Gastrocnemius medialis (tissue), 4 donors: ENCODE measurements at regions of chr9 and their contacts with region 1.

Region 1: GRCh38 chr9:101727612-101728524 is 10.6 kb downstream of the GRIN3A start:
- DNase-seq: no peak
- ATAC-seq: no peak
- H3K4me3 ChIP-seq: no peak overlapping the region
- H3K27ac ChIP-seq: no peak overlapping the region
- H3K4me1 ChIP-seq: no peaks in the 10 kb centered on the region
- H3K27me3 ChIP-seq: no peaks in the 10 kb centered on the region
- CTCF ChIP-seq: peak in 1 of 5 experiments; percentile 30
- POLR2A ChIP-seq: no peak

Region 2: DNA sequence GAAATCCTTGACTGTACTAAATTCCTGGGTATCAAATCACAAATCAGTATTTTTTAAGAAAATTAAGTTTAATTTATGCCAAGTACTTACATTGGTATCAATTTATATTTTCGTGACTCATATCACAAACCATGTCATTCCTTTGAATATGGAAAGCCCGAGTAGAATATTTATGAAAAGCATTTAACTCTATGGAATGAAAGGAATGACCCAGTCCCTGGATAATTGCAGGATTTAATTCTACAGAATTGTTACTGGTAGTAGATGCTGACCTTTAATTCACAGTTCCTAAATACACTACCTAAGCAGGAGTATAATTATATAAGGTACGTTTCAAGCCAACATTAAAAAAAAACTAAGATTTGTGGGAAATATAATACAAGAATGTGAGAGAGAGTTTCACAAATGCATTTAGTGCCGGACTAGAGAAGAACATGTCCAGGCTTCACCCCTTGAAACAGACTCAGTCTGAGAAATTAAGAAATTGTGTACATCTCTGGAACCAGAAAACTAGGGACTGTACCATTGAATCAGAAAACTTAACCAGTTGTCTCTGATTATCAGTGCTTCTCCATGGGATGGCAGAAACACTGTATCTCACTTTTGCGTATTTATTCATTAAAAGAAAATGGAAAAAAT is 727.8 kb before region 1 on chr9:
- in situ Hi-C with region 1: no loop called
- intact Hi-C with region 1: no loop called
- DNase-seq: no peak
- ATAC-seq: no peak
- H3K4me3 ChIP-seq: no peak overlapping the region
- H3K27ac ChIP-seq: no peak overlapping the region
- H3K4me1 ChIP-seq: no peaks in the 10 kb centered on the region
- H3K27me3 ChIP-seq: no peaks in the 10 kb centered on the region
- CTCF ChIP-seq: no peak
- POLR2A ChIP-seq: no peak

Region 3: DNA sequence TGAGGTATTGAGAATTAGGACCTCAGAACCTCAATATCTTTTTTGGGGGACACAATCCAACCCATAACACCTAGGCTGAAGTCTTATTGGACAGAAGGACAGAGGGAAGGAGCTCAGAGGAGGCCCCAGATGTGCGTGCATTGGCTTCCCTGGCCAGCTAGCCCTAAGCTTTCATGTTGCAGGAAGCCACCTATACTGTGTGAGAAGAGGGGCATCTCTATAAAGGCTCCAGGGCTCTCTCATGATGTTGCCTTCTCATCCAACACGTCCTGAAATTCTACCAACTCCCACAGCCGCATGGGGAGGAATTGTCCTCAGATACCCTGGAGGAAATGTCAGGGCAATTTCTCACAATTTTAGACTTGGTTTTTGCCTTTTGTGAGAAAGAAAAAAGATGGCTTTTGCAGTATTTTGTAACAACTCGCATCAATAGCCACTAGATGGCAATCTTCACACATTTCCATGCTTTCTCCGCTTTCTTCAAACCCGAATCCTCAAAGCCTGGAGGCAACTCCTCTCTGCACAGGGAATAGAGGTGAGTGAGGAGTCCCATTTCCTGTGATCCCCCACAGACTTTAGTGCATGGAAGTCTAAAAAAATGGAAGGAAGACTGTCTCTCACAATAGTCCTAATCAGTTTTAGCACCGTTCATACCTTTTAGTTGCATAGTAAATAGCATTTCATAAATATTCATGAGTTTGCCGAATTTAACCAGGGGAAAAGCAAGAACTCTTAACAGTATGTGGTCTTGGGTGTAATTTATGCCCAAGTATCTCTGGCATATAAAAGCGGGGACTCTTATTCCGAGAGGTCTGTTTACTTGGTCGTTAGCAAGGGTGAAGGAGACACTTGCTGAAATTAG is 125.7 kb before region 1 on chr9:
- in situ Hi-C with region 1: loop called in 1 of 4 experiments (anchors 5 kb)
- intact Hi-C with region 1: loop called (anchors 5 kb)
- DNase-seq: no peak
- ATAC-seq: no peak
- H3K4me3 ChIP-seq: no peak overlapping the region
- H3K27ac ChIP-seq: no peak overlapping the region
- H3K4me1 ChIP-seq: no peaks in the 10 kb centered on the region
- H3K27me3 ChIP-seq: no peaks in the 10 kb centered on the region
- CTCF ChIP-seq: peak in 4 of 5 experiments; percentile 15 to 62 (median 43)
- POLR2A ChIP-seq: no peak